ENCODE measurements at regions of chr11 and their contacts with region 1.

Region 1: DNA sequence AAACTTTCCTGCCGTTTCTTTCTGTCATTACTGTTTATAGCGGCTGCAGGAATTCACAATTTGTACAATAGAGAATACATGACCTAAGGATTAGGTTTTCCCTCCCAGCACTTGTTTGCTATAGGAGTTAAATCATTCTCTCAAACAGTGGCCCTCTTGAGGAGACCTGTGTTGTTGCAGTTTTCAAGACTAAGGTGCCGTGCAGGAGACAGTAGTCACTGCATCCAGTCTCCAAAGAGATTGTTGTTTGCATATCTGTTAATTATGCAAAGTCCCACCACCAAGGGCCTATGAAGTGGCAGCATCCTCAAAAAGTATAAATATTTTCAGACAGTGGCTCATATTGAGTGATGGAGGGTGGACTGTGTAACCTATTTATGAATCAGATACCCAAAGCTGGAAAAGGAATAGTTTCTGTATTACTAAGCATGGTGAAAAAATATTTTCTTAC is 2.3 kb downstream of the PRSS23 start:
- DNase-seq: peak; percentile 27
- H3K4me3 Mint-ChIP-seq: no peak overlapping the region
- H3K27ac Mint-ChIP-seq: no peak overlapping the region
- H3K4me1 Mint-ChIP-seq: peaks cover 57% of the 10 kb centered on the region
- H3K27me3 Mint-ChIP-seq: peaks cover 51% of the 10 kb centered on the region

Region 2: GRCh38 chr11:85752890-85753581 is 1049.6 kb before region 1 on chr11:
- CTCF ChIA-PET with region 1: no interaction called
- POLR2A ChIA-PET with region 1: no interaction called
- intact Hi-C with region 1: loop called (anchors 2 kb)
- DNase-seq: peak; percentile 94
- H3K4me3 Mint-ChIP-seq: peak overlapping the region; percentile 70
- H3K27ac Mint-ChIP-seq: peak overlapping the region; percentile 96
- H3K4me1 Mint-ChIP-seq: peaks cover 95% of the 10 kb centered on the region
- H3K27me3 Mint-ChIP-seq: peaks cover 3% of the 10 kb centered on the region

Region 3: GRCh38 chr11:86608251-86608799 is 194.3 kb before region 1 on chr11:
- CTCF ChIA-PET with region 1: interaction called, 10 read pairs
- POLR2A ChIA-PET with region 1: no interaction called
- intact Hi-C with region 1: no loop called
- DNase-seq: peak; percentile 59
- H3K4me3 Mint-ChIP-seq: no peak overlapping the region
- H3K27ac Mint-ChIP-seq: no peak overlapping the region
- H3K4me1 Mint-ChIP-seq: peaks cover 10% of the 10 kb centered on the region
- H3K27me3 Mint-ChIP-seq: peaks cover 2% of the 10 kb centered on the region

Region 4: DNA sequence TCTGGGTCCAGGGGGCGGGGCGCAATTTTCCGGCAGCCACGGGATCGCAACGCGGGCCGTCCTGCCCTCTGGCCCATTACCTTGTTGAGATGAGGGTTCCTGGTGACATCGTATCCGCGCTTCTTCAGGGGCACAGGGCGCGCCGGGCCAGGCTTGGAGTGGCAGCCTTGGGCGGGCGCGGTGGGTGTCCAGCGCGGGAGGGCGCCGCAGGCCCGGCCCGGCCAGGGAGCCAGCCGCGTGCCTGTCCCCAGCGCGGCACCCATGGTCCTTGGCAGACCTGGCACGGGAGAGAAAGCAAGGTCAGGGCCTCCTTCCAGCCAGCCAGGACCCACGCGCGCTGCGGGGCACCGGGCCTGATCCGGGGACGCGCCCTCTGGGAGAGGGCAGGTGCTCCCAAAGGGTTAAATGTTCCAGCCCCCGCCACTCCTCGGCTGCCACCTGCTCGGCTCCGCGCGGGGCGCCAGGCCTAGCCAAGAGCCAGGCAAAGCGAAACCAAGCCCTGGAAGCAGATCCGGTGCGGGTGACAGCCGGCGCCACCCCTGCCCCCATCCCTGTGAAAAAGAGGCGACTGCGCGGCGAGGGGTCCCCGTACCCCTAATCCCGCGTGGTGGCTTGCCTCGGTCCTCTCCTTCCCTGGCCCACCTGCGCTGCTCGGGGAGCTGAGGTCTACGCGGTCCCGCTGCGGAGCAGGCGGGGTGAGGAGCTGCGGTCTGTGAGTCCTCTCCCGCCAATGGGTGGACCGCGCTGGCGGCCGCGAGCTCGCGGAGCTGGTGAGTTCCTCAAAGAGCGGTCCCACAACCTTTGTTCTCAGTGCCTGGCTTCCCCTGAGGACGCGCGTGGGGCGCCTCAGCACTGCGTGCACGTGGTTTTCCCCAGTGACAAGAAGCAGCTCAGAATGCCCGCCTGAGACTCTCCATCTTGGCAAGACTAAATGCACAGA is 130.7 kb before region 1 on chr11 and contains the start of gene ME3:
- CTCF ChIA-PET with region 1: no interaction called
- POLR2A ChIA-PET with region 1: no interaction called
- intact Hi-C with region 1: loop called (anchors 1 kb)
- DNase-seq: peak; percentile 61
- H3K4me3 Mint-ChIP-seq: peak within 1 kb of the TSS; percentile 66
- H3K27ac Mint-ChIP-seq: no peak within 1 kb of the TSS
- H3K4me1 Mint-ChIP-seq: peaks cover 8% of the 10 kb centered on the region
- H3K27me3 Mint-ChIP-seq: peaks cover 23% of the 10 kb centered on the region
- total RNA-seq, gene ME3: 2.3 to 2.8 TPM

Region 5: GRCh38 chr11:86740709-86741483 is 61.7 kb before region 1 on chr11:
- CTCF ChIA-PET with region 1: no interaction called
- POLR2A ChIA-PET with region 1: no interaction called
- intact Hi-C with region 1: loop called (anchors 1 kb)
- DNase-seq: peak; percentile 55
- H3K4me3 Mint-ChIP-seq: no peak overlapping the region
- H3K27ac Mint-ChIP-seq: no peak overlapping the region
- H3K4me1 Mint-ChIP-seq: peaks cover 19% of the 10 kb centered on the region
- H3K27me3 Mint-ChIP-seq: peaks cover 4% of the 10 kb centered on the region